Endothelial cell of umbilical vein (primary cell): ENCODE measurements at regions of chr6 and their contacts with region 1.

Region 1: DNA sequence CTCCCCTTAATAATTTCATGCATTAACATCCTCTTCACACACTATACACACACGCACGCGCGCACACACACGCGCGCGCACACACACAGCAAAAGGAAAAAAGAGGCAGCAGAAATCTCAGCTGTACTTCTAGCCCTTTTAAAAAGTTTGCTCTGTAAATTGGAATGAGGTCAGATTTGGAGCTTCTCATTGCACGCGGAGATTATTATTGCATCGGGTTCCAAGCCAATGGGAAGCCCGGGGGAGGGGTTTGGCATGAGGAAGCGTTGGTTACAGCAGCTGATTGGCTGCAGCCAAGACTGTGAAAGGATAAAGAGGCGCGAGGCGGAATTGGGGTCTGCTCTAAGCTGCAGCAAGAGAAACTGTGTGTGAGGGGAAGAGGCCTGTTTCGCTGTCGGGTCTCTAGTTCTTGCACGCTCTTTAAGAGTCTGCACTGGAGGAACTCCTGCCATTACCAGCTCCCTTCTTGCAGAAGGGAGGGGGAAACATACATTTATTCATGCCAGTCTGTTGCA is at the start of gene SOX4:
- DNase-seq: peak; percentile 99
- H3K4me3 ChIP-seq: peak within 1 kb of the TSS; percentile 85 to 98 (median 96)
- H3K27ac ChIP-seq: peak within 1 kb of the TSS; percentile 94
- H3K4me1 ChIP-seq: peaks cover 14% of the 10 kb centered on the region
- H3K27me3 ChIP-seq: no peaks in the 10 kb centered on the region
- CTCF ChIP-seq: no peak
- POLR2A ChIP-seq: peak; percentile 100
- total RNA-seq, gene SOX4: 121 and 127 TPM in 2 replicates

Region 2: GRCh38 chr6:20789162-20789561 is 804.3 kb before region 1 on chr6:
- CTCF ChIA-PET with region 1: interaction called, 15 read pairs
- POLR2A ChIA-PET with region 1: no interaction called
- dilution Hi-C with region 1: no loop called
- intact Hi-C with region 1: loop called (anchors 10 kb)
- DNase-seq: peak; percentile 18
- H3K4me3 ChIP-seq: no peak overlapping the region
- H3K27ac ChIP-seq: no peak overlapping the region
- H3K4me1 ChIP-seq: no peaks in the 10 kb centered on the region
- H3K27me3 ChIP-seq: no peaks in the 10 kb centered on the region
- CTCF ChIP-seq: no peak
- POLR2A ChIP-seq: no peak

Region 3: GRCh38 chr6:21022343-21023107 is 570.9 kb before region 1 on chr6:
- CTCF ChIA-PET with region 1: interaction called, 8 read pairs
- POLR2A ChIA-PET with region 1: interaction called, 12 read pairs
- dilution Hi-C with region 1: no loop called
- intact Hi-C with region 1: loop called (anchors 1 kb)
- DNase-seq: peak; percentile 92
- H3K4me3 ChIP-seq: no peak overlapping the region
- H3K27ac ChIP-seq: peak overlapping the region; percentile 75
- H3K4me1 ChIP-seq: peaks cover 39% of the 10 kb centered on the region
- H3K27me3 ChIP-seq: no peaks in the 10 kb centered on the region
- CTCF ChIP-seq: no peak
- POLR2A ChIP-seq: no peak

Region 4: DNA sequence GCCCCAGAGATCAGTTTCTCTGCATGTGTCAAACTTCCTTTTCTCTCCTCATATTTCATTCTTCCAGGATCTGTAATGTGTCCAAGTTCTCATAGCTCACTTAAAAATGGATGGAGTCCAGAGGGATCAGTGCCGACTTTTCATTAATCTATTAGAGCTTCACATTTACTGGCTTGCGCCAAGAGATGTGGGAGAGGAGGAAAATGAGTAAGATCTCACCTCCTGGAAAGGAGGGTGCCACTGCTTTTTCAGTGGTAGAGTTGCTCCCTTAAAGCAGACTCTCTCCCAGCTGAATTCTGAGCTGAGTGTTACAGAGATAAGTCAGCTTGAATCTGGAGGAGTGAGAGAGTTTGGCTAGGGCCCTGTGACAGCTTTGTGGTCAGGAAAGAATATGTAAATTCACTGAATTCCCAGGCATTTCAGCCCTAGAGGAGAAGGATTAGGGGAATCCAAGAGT is 176.0 kb after region 1 on chr6:
- CTCF ChIA-PET with region 1: interaction called, 8 read pairs
- POLR2A ChIA-PET with region 1: interaction called, 36 read pairs
- dilution Hi-C with region 1: no loop called
- intact Hi-C with region 1: loop called (anchors 1 kb)
- DNase-seq: peak; percentile 94
- H3K4me3 ChIP-seq: no peak overlapping the region
- H3K27ac ChIP-seq: peak overlapping the region; percentile 98
- H3K4me1 ChIP-seq: peaks cover 53% of the 10 kb centered on the region
- H3K27me3 ChIP-seq: no peaks in the 10 kb centered on the region
- CTCF ChIP-seq: no peak
- POLR2A ChIP-seq: no peak

Region 5: DNA sequence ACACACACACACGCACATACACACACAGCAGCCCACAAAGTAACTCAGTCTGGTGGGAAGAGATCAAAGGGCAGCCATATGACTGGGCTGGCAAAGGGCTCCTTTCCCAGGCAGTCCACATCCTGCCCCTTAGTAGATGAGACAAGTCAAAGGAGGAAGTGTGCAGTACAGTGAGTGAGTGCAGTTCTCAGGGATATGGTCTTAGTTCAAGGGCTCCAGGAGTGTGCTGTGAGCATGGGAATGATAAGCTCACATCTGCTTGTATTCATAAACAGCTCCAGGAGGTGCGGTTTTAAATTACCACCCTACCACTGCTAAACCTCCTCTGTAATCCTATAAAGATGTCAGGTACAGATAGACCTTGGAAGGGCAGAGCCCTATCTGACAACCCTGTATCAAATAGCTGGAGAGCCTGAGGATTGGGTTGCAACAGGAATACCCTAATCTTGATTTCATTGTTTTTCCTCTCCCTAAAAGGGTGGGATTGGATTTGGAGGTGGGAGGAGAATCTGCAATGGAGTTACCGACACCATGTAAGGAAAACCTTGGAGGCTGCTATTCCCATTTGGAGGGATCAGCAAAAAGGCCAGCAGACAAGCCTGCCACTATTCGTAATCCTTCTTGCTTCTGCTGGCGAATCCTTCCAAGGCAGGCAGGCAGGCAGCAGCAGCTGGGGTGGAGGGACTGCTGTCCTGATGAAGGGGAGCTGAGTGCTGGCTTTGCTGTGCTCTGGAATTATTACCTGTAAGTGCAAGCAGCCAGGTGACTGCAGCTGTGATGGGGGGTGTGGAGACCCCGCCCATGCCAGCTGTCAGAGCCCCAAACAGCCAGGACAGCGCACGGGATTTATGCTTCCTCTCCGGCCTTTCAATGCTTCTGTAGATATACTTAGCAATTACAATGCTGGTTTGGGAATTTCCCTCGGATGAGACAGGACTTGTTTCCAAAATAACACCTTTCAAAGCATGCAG is 360.6 kb after region 1 on chr6:
- CTCF ChIA-PET with region 1: interaction called, 4 read pairs
- POLR2A ChIA-PET with region 1: interaction called, 19 read pairs
- dilution Hi-C with region 1: no loop called
- intact Hi-C with region 1: no loop called
- DNase-seq: peak; percentile 98
- H3K4me3 ChIP-seq: no peak overlapping the region
- H3K27ac ChIP-seq: peak overlapping the region; percentile 70
- H3K4me1 ChIP-seq: peaks cover 37% of the 10 kb centered on the region
- H3K27me3 ChIP-seq: no peaks in the 10 kb centered on the region
- CTCF ChIP-seq: no peak
- POLR2A ChIP-seq: no peak

Region 6: GRCh38 chr6:22053391-22053997 is 460.0 kb after region 1 on chr6:
- CTCF ChIA-PET with region 1: no interaction called
- POLR2A ChIA-PET with region 1: no interaction called
- dilution Hi-C with region 1: no loop called
- intact Hi-C with region 1: no loop called
- DNase-seq: no peak
- H3K4me3 ChIP-seq: no peak overlapping the region
- H3K27ac ChIP-seq: no peak overlapping the region
- H3K4me1 ChIP-seq: no peaks in the 10 kb centered on the region
- H3K27me3 ChIP-seq: no peaks in the 10 kb centered on the region
- CTCF ChIP-seq: no peak
- POLR2A ChIP-seq: no peak

Region 7: DNA sequence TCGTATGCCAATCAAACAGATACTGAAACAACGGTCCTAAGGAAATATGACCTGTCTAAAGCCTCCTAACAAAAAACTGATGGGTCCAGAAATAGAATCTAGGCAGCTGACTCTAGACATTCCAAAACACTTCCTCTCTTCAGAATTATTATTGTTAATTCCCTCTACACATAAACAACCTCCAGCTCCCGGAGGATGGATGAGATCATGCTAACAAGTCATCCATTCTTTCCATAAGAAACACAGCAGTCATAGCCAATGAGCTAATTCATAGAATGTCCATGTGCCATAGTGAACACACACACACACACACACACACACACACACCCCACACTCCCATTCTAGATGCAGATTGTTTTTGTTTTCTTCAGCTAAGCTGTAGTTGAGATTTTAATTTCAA is 1020.2 kb after region 1 on chr6:
- CTCF ChIA-PET with region 1: interaction called, 3 read pairs
- POLR2A ChIA-PET with region 1: interaction called, 3 read pairs
- dilution Hi-C with region 1: no loop called
- intact Hi-C with region 1: loop called (anchors 10 kb)
- DNase-seq: peak; percentile 96
- H3K4me3 ChIP-seq: no peak overlapping the region
- H3K27ac ChIP-seq: peak overlapping the region; percentile 53
- H3K4me1 ChIP-seq: peaks cover 12% of the 10 kb centered on the region
- H3K27me3 ChIP-seq: no peaks in the 10 kb centered on the region
- CTCF ChIP-seq: no peak
- POLR2A ChIP-seq: no peak